ENCODE measurements at regions of chr11 and their contacts with region 1.

Region 1: DNA sequence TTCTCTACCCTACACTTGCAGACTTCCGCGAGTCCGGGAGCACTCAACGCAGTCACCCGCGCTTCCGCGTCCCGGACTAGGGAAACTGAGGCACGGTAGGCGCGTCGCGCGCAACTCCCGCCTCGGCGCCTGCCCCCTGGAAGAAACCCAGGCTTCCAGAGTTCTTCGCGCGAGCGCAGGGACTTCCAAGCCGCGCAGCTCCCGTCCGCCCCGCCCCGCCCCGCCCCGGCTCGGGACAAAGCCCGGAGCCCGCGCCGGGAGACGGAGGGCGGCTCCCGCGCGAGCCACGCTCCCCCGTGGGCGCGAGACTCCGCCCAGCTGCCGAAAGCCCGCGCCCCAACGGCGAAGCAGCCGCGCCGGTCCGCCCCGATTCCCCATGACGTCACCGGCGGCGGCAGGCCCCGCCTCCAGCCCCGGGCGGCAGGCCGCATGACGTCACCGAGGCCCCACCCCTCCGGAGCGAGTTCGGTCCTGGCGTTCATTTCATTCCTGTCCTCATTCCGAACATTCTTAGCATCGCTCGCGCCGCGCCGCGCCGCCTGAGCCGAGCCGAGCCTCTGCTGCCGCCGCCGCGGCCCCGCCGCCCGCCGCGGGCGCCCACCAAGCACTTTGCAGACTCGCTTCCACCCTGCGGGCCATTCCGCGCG is at the start of gene TEAD1:
- DNase-seq: peak; percentile 96 to 98
- ATAC-seq: peak; percentile 90 to 93 (median 91)
- H3K4me3 ChIP-seq: peak within 1 kb of the TSS; percentile 83
- H3K27ac ChIP-seq: peak within 1 kb of the TSS; percentile 96
- H3K4me1 ChIP-seq: peaks cover 25% of the 10 kb centered on the region
- H3K27me3 ChIP-seq: no peaks in the 10 kb centered on the region
- CTCF ChIP-seq: no peak
- total RNA-seq, gene TEAD1: 111 to 178 (median 141) TPM

Region 2: DNA sequence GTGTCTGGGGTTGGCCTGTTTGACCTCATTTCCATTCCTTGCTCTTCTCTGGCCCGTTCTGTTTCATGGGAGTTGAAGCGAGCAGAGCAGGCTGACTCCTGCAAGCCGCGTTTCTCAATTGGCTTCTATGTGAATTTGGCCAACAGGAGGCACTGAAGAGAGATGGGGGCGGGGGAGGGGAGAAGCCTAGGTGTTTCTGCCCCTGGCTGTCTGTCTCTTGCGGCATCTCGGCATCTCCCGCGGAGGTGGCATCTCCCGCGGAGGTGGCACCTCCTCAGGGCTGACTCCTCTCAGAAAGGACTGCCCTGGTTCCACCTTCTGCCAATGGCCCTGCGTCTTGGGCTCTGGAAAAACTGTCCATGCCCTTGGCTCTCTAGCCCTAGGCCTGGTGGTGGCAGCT is 1195.4 kb before region 1 on chr11:
- intact Hi-C with region 1: no loop called
- DNase-seq: no peak
- ATAC-seq: no peak
- H3K4me3 ChIP-seq: no peak overlapping the region
- H3K27ac ChIP-seq: no peak overlapping the region
- H3K4me1 ChIP-seq: peaks cover 21% of the 10 kb centered on the region
- H3K27me3 ChIP-seq: no peaks in the 10 kb centered on the region
- CTCF ChIP-seq: no peak

Region 3: DNA sequence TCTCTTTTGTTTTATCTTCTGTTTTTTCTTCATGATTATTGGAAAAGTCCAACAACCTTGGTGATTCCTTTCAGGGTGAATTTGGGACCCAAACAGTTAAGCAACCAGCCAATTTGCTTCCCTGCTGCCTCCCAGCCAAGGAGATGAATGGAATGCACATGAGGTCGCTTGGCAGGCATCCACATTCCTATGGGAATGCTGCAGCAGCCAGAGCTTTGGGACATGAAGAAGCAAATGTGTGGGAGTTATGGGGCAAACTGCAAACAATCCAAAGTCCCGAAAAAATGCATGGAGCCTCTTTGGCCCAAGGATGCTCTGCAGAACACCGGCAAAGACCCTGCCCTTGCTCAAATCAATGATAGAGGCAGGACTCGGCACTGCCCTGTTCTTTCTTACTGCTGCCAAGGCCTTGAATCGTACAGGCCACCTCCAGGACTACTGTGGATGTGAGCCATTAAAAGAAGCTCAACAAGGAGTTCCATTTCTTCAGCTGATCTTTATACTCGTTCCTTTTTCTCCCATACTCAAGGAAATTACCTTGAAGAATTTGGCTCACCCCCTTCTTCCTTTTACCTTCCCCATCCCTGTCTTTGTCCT is 117.2 kb before region 1 on chr11:
- intact Hi-C with region 1: no loop called
- DNase-seq: peak; percentile 66 to 71
- ATAC-seq: peak in 1 of 4 donors; percentile 52
- H3K4me3 ChIP-seq: no peak overlapping the region
- H3K27ac ChIP-seq: no peak overlapping the region
- H3K4me1 ChIP-seq: peaks cover 11% of the 10 kb centered on the region
- H3K27me3 ChIP-seq: no peaks in the 10 kb centered on the region
- CTCF ChIP-seq: no peak

Region 4: DNA sequence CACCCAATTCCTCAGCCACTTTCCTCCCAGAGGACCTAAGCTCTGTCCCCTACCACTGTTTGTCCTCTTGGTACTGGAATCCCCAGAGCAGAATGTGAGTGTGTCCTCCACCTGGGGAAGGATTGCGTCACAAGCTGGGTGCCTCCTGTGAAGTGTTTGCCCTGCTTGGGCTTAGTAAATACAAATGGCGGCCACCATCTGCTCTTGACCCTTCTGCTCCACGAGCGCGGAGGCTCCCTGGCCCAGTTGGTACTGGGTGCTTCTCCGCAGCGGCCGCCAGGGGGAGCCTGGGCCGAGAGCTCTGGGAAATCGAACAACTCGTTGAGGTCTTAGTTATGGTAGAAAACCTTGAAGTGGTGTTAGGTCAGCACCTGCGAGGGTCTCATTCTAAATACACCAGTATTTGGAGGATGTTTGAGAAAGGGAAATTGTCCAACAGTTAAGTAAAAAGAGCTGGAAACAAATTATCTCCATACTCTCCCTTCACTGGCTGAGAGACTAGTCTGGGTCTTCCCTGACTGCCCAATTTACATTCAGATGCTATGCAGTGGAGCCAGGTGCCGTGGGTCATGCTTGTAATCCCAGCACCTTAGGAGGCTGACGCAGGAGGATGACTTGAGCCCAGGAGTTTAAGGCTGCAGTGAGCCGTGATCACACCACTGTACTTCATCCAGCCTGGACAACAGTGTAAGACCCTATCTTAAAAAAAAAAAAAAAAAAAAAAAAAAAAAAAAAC is 74.5 kb before region 1 on chr11:
- intact Hi-C with region 1: loop called in 1 of 2 experiments (anchors 5 kb)
- DNase-seq: peak; percentile 47 to 77
- ATAC-seq: peak; percentile 81 to 96 (median 86)
- H3K4me3 ChIP-seq: no peak overlapping the region
- H3K27ac ChIP-seq: no peak overlapping the region
- H3K4me1 ChIP-seq: no peaks in the 10 kb centered on the region
- H3K27me3 ChIP-seq: no peaks in the 10 kb centered on the region
- CTCF ChIP-seq: peak; percentile 81

Region 5: DNA sequence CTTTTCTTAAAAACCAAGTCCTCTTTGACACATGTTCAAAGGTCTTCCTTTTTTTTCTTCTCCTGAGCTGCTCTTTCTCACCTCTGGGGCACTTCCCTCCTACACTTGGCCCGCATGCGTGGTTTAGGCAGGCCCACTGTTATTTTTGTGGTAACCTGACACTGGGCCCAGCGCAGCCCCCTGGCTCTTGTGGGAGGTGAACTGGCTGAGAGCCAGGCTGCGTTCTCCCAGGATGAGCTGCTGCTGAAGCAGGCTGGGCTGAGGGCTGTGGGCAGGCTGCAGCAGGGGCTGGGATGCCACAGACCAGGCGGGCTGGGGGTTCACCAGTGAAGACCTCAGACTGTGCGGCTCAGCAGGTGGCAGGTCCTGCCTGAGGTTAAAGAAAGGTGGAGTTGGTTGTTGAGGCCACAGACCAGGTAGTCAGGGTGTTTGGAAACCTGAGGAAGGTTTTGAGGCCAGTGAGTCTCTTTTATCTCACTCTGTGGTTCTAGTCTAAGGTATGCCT is 72.6 kb after region 1 on chr11:
- intact Hi-C with region 1: loop called (anchors 2 to 5 kb)
- DNase-seq: peak; percentile 60 to 93
- ATAC-seq: peak; percentile 74 to 82 (median 76)
- H3K4me3 ChIP-seq: peak overlapping the region; percentile 56
- H3K27ac ChIP-seq: peak overlapping the region; percentile 81
- H3K4me1 ChIP-seq: peaks cover 88% of the 10 kb centered on the region
- H3K27me3 ChIP-seq: no peaks in the 10 kb centered on the region
- CTCF ChIP-seq: peak; percentile 25

Region 6: GRCh38 chr11:12813371-12814225 is 139.6 kb after region 1 on chr11:
- intact Hi-C with region 1: loop called in 1 of 2 experiments (anchors 5 kb)
- DNase-seq: peak in 1 of 2 donors; percentile 63
- ATAC-seq: peak in 3 of 4 donors; percentile 52 to 60 (median 56)
- H3K4me3 ChIP-seq: no peak overlapping the region
- H3K27ac ChIP-seq: peak overlapping the region; percentile 87
- H3K4me1 ChIP-seq: peaks cover 75% of the 10 kb centered on the region
- H3K27me3 ChIP-seq: no peaks in the 10 kb centered on the region
- CTCF ChIP-seq: no peak

Region 7: DNA sequence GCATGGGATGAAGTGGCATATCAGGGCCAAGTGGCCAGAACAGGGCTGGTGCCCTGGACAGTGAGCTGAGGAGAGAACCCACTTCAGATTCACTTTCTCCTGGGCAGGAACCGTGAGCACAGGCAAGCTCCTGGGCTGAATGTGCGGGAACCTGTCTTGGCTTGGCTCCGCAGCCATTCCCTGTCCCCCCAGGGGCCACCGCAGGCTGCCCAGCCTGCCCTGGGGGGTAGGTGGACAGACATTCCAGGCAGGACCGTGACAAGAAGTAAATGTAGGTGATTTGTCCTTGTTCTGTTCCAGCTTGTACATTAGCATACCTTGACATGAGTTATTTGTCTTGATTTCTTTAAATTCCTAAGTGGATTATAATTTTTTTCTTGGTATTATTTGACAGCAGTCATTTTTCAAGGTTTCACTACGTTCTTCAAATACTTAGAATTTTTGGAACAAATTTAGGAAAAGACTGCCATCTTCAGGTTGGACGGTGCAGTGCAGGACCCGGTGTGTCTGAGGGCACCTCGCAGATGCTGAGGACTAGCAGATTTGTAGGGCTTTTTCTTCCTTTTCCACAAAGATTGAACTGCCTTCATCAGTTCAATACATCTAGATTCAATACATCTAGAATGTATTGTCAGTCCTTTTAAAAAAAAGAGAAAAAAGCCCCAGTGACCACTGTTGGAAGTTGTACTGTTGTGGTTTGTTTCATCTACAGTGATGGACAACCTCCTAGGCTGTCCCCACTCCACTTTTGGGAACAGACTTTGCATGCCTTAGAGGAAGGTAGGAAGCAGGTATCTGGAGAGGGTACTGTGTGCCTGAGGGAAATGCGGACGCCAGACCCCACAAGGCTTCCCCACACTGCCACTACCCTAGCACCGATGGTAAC is 220.0 kb after region 1 on chr11:
- intact Hi-C with region 1: loop called (anchors 5 kb)
- DNase-seq: peak; percentile 49 to 76
- ATAC-seq: no peak
- H3K4me3 ChIP-seq: no peak overlapping the region
- H3K27ac ChIP-seq: peak overlapping the region; percentile 70
- H3K4me1 ChIP-seq: peaks cover 54% of the 10 kb centered on the region
- H3K27me3 ChIP-seq: no peaks in the 10 kb centered on the region
- CTCF ChIP-seq: peak; percentile 91

Measured in psoas muscle (tissue), 8 donors.